Activated T-helper 2 cell treated with anti-CD3 and anti-CD28 coated beads, Interferon-gamma antibody, Interleukin-2, Interleukin-4, amounts not matched to agents 10 μg/mL and 5 μg/mL and 100 μg/mL, durations not matched to agents 14 hours and 24 hours and 36 hours (primary cell): ENCODE measurements at regions of chr13 and their contacts with region 1.

Region 1: DNA sequence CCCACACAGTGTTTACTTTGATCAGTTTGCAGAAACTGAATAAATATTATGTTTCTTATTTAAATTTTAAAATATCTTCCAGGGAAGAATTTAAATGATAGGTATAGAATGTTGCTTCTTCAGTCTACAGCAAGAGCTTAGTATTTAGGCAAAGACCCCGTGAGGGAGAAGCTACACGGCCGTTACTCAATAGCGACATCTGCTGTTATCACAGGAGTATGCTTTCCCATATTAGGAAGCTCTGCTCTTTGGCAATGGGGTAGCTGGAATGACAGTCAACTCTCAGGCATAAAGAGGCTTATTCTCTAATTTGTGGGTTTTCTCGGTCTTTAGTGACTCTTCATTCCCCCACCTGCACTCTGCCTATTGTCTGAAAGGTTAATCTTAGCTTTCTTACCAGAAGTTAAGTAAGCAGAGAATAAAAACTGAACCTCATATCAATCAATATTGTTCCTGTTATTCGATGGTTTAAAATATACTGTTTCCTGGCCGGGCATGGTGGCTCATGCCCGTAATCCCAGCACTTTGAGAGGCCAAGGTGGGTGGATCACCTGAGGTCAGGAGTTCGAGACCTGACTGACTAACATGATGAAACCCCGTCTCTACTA is 13.2 kb upstream of the LHFPL6 start:
- DNase-seq: no peak
- H3K4me3 Mint-ChIP-seq: no peak overlapping the region
- H3K27ac Mint-ChIP-seq: no peak overlapping the region
- H3K4me1 Mint-ChIP-seq: no peaks in the 10 kb centered on the region
- H3K27me3 Mint-ChIP-seq: peaks cover 19% of the 10 kb centered on the region

Region 2: DNA sequence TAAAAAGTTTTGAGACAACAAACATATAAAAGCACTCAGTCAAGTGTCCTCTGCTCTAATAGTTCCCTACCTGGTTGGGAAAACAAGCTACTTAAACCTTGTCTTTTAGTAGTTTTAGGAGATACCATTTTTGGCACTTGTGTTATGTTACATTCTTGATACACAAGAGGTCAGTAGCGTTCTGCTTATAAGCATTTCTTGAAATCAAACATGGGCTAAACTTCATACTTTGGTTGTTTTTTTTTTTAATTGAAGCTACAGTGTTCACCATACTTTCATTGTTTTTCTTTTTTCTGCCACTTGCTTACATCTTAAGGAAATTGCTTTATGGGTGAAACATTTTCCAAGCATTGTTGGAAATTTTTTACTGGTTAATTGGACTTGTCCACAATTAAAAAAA is 565.0 kb before region 1 on chr13:
- intact Hi-C with region 1: loop called (anchors 2 kb)
- DNase-seq: no peak
- H3K4me3 Mint-ChIP-seq: no peak overlapping the region
- H3K27ac Mint-ChIP-seq: no peak overlapping the region
- H3K4me1 Mint-ChIP-seq: no peaks in the 10 kb centered on the region
- H3K27me3 Mint-ChIP-seq: no peaks in the 10 kb centered on the region

Region 3: DNA sequence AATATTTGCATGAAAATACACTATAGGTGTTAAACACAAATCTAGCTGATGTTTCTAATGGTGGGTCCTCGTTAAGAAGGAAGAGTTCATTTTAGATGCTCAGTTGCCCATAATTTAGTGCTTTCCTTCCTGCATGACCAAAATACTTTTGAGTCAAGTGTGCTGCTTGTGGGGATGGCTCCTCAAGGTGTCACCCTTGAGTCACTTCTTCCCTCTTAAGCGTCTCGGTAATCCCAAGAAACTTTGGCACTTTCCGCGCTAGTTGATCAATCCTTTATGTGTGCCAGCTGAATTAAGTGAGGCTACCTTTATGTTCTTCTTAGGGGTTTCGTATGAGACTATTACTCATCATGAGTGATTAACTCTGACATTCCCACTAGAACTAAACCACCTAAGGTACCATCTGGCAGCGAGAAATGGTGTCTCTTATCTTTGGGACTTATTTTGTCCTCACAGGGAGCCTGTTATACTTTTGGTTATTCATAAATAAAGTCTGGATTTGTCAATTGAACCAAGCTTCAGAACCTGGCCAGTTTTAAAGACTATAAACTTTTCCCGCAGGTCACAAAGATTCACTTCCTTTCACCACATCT is 471.2 kb before region 1 on chr13:
- intact Hi-C with region 1: loop called (anchors 1 kb)
- DNase-seq: no peak
- H3K4me3 Mint-ChIP-seq: no peak overlapping the region
- H3K27ac Mint-ChIP-seq: no peak overlapping the region
- H3K4me1 Mint-ChIP-seq: peaks cover 12% of the 10 kb centered on the region
- H3K27me3 Mint-ChIP-seq: peaks cover 31% of the 10 kb centered on the region

Region 4: DNA sequence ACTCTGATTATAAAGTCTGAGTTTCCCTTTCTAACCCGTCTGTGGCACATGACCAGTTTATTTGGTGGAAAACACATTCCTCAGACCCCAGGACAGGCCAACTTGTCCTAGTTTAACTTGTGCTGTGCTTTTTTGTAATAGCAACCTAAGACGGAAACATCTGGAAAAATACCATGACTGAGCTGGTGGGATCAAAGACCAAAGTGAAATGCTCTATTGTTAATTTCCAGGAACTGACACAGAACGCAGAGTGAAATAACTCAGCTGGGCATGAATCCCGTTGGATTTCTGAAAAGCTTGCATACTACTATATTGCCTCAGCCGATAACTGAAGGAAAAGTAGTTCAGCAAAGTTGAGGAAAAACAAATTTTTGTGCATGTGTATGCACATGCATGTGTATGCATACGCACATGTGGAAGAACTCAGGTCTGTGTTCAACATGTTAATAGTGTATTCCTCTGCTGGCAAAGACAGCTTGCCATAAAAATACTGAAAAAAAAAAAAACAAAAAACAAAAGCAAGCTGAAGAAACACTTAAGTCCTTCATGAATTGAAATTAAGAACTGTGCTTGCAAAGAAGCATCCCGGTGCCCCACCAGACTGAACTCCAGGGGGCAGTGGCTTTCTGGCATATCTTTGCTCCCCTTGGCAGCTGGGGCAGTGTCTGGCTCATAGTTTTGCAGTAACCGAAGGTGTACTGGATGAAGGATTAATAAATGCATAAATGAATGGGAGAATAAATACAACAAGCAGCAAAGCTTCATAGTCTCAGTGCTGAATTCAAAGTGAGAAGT is 201.0 kb before region 1 on chr13:
- intact Hi-C with region 1: loop called (anchors 10 kb)
- DNase-seq: no peak
- H3K4me3 Mint-ChIP-seq: no peak overlapping the region
- H3K27ac Mint-ChIP-seq: no peak overlapping the region
- H3K4me1 Mint-ChIP-seq: no peaks in the 10 kb centered on the region
- H3K27me3 Mint-ChIP-seq: peaks cover 8% of the 10 kb centered on the region

Region 5: DNA sequence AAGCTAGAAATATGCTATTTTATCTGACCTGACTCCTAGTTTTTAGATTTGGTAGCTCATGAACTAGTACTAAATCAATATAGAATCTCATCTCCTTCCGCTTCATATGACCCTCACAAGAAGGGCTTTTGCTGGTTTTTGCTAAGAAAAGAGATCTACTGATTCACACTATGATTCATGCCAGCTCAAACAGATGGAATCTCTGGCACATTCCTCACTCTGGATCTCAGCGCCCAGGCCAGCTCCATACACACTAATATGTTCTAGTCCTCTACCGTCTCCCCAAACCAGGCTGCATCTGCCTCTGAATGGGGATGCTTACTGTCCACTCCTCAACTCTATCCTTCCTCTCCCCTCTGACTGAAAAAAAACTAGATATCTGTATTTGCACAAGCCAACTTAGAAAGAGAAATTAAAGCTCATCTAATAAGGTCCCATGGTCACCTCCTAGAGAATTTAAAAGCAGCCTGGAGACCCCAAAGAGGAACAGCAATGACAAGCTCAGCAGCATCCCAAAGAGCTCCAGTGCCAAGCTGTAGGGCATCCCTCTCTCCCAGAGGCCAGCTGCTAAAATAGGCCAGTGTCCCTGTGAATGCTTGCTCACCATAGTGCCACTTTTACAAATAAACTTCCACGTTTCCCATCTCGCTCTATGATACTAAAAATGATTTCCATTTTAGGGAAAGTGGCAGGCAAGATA is 88.1 kb before region 1 on chr13:
- intact Hi-C with region 1: no loop called
- DNase-seq: no peak
- H3K4me3 Mint-ChIP-seq: no peak overlapping the region
- H3K27ac Mint-ChIP-seq: no peak overlapping the region
- H3K4me1 Mint-ChIP-seq: no peaks in the 10 kb centered on the region
- H3K27me3 Mint-ChIP-seq: peaks cover 5% of the 10 kb centered on the region

Region 6: GRCh38 chr13:39665763-39666162 is 49.6 kb after region 1 on chr13:
- intact Hi-C with region 1: loop called (anchors 5 kb)
- DNase-seq: no peak
- H3K4me3 Mint-ChIP-seq: no peak overlapping the region
- H3K27ac Mint-ChIP-seq: no peak overlapping the region
- H3K4me1 Mint-ChIP-seq: peaks cover 1% of the 10 kb centered on the region
- H3K27me3 Mint-ChIP-seq: no peaks in the 10 kb centered on the region

Region 7: DNA sequence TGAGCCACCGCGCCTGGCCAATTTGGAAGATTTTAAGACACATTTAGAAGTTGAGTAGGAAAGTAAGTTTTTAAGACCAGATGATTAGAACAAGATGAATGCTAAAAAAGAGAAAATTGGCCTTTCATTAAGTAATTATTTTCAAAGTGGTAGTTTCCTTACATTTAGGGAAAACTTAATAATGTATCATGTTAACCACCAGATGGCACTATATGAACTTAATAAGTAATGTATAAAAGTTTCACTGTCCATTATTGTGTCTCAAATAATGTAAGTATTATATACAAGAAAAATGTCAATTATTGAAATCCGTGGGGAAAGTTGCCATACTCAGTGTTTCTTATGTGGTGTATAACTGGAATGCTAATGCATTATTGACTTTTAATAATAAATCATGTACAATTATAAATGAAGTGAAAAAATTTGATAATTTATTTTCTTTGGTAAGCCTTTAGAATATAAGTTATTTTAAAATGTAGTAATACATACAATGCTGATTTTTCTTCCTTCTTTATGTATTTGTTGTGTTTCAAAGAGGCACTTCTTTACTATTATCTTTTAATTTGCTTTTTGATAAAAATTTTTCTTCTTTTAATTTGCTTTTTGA is 68.4 kb after region 1 on chr13:
- intact Hi-C with region 1: no loop called
- DNase-seq: no peak
- H3K4me3 Mint-ChIP-seq: no peak overlapping the region
- H3K27ac Mint-ChIP-seq: no peak overlapping the region
- H3K4me1 Mint-ChIP-seq: peaks cover 27% of the 10 kb centered on the region
- H3K27me3 Mint-ChIP-seq: no peaks in the 10 kb centered on the region

Region 8: GRCh38 chr13:39855236-39855635 is 239.0 kb after region 1 on chr13:
- intact Hi-C with region 1: no loop called
- DNase-seq: no peak
- H3K4me3 Mint-ChIP-seq: no peak overlapping the region
- H3K27ac Mint-ChIP-seq: no peak overlapping the region
- H3K4me1 Mint-ChIP-seq: peaks cover 4% of the 10 kb centered on the region
- H3K27me3 Mint-ChIP-seq: no peaks in the 10 kb centered on the region